HepG2 (cell line): ENCODE measurements at regions of chr12 and their contacts with region 1.

Region 1: DNA sequence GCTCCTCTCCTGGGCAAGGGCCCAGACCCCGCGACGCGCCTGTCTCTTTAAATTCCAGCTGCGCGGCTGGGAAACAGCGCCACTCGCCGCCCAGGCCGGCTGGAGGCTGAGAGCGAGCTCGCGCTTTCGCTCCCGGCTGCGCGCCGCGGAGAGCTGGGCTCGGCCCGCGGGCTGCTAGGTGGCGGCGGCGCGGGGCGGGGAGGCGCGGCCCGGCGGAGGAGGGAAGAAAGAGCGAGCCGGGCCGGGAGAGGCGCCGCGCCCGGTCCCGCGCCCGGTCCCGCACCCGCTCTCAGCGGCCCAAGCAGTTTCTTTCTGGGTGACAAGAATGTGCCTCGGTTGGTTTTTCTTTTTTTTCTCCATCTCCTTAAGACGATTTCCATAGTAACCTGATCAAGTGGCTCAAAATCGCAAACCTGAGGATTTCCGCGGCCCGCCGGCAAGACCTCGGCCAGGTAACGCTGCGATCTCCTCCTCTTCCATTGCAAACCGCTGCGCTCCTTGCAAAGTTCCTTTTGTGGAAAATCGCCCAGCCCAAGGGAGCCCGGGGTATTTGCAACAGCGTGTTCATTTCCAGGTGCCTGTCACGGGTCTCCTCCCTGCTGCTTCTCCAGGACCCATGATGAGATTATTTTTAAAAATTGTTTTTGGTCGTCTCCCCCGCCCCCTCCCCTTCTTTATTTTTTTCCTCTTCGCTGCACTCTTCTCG is 259.5 kb upstream of the E2F7 start:
- DNase-seq: peak; percentile 33
- ATAC-seq: peak; percentile 100
- H3K4me3 ChIP-seq: peak overlapping the region; percentile 41 to 61 (median 45); a peak in 5 of 6 replicates
- H3K27ac ChIP-seq: no peak overlapping the region
- H3K4me1 ChIP-seq: peaks cover 4% of the 10 kb centered on the region; the same call in 1 of the 2 replicates
- H3K27me3 ChIP-seq: peaks cover 0 to 23% of the 10 kb centered on the region in 2 experiments; a peak in 2 of 5 replicates
- CTCF ChIP-seq: peak; percentile 80
- EP300 ChIP-seq: no peak
- POLR2A ChIP-seq: no peak
- RAD21 ChIP-seq: peak; percentile 50

Region 2: GRCh38 chr12:77065361-77066204 is 259.3 kb before region 1 on chr12 and contains the start of gene E2F7:
- CTCF ChIA-PET with region 1: no interaction called
- POLR2A ChIA-PET with region 1: no interaction called
- in situ Hi-C with region 1: no loop called
- intact Hi-C with region 1: loop called (anchors 1 kb)
- DNase-seq: peak; percentile 82
- ATAC-seq: peak; percentile 99
- H3K4me3 ChIP-seq: peak within 1 kb of the TSS; percentile 59 to 87 (median 82)
- H3K27ac ChIP-seq: peak within 1 kb of the TSS; percentile 39
- H3K4me1 ChIP-seq: peaks cover 24% of the 10 kb centered on the region
- H3K27me3 ChIP-seq: no peaks in the 10 kb centered on the region; a peak in 1 of 5 replicates
- CTCF ChIP-seq: no peak
- EP300 ChIP-seq: no peak
- POLR2A ChIP-seq: peak; percentile 56 to 66; a peak in 3 of 4 replicates
- RAD21 ChIP-seq: no peak
- total RNA-seq, gene E2F7: 7.3 and 9.1 TPM in 2 replicates